Caco-2 (cell line): ENCODE measurements at regions of chr2 and their contacts with region 1.

Region 1: GRCh38 chr2:233029321-233029720 is 3.2 kb upstream of the NEU2 start:
- DNase-seq: no peak
- H3K4me3 ChIP-seq: no peak overlapping the region
- H3K4me3 Mint-ChIP-seq: no peak overlapping the region
- H3K27ac Mint-ChIP-seq: no peak overlapping the region
- H3K4me1 ChIP-seq: no peaks in the 10 kb centered on the region
- H3K4me1 Mint-ChIP-seq: no peaks in the 10 kb centered on the region
- H3K27me3 ChIP-seq: no peaks in the 10 kb centered on the region
- H3K27me3 Mint-ChIP-seq: no peaks in the 10 kb centered on the region
- CTCF ChIP-seq: no peak

Region 2: GRCh38 chr2:232852676-232853075 is 176.6 kb before region 1 on chr2:
- CTCF ChIA-PET with region 1: no interaction called
- POLR2A ChIA-PET with region 1: no interaction called
- intact Hi-C with region 1: loop called (anchors 2 kb)
- DNase-seq: no peak
- H3K4me3 ChIP-seq: no peak overlapping the region
- H3K4me3 Mint-ChIP-seq: no peak overlapping the region
- H3K27ac Mint-ChIP-seq: no peak overlapping the region
- H3K4me1 ChIP-seq: peaks cover 11% of the 10 kb centered on the region
- H3K4me1 Mint-ChIP-seq: peaks cover 7% of the 10 kb centered on the region
- H3K27me3 ChIP-seq: no peaks in the 10 kb centered on the region
- H3K27me3 Mint-ChIP-seq: no peaks in the 10 kb centered on the region
- CTCF ChIP-seq: no peak

Region 3: DNA sequence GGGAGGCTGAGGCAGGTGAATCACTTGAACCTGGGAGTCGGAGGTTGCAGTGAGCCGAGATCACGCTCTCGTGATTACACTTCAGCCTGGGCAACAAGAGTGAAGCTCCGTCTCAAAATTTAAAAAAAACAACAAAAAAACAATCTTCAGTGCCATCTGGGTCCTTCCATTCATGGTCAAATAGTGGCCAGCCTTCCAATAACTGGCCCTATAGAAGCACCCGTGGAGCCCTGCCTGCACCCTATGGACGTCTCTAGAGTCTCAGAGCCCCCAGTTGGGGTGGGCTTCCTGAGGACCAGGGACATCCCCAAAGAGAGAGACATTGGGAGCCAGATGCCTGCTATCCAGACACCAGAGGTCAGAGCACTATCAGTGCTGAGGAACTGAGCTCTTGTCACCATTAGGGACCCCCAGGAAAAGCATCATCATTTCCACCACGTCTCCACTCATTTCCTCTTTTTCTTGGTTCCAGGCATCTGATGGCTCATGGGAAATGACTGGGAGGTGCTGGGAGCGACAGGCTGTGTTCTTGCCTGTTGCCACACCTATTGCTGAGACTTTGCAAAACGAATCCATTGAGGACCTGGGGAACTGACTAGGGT is 12.5 kb after region 1 on chr2:
- CTCF ChIA-PET with region 1: no interaction called
- POLR2A ChIA-PET with region 1: no interaction called
- intact Hi-C with region 1: no loop called
- DNase-seq: no peak
- H3K4me3 ChIP-seq: no peak overlapping the region
- H3K4me3 Mint-ChIP-seq: no peak overlapping the region
- H3K27ac Mint-ChIP-seq: no peak overlapping the region
- H3K4me1 ChIP-seq: no peaks in the 10 kb centered on the region
- H3K4me1 Mint-ChIP-seq: no peaks in the 10 kb centered on the region
- H3K27me3 ChIP-seq: no peaks in the 10 kb centered on the region
- H3K27me3 Mint-ChIP-seq: peaks cover 5% of the 10 kb centered on the region
- CTCF ChIP-seq: no peak